Cardiac septum (tissue), 1 donor: ENCODE measurements at regions of chr12 and their contacts with region 1.

Region 1: GRCh38 chr12:25386831-25387731 is 136.4 kb upstream of the KRAS start:
- DNase-seq: peak; percentile 89

Region 2: DNA sequence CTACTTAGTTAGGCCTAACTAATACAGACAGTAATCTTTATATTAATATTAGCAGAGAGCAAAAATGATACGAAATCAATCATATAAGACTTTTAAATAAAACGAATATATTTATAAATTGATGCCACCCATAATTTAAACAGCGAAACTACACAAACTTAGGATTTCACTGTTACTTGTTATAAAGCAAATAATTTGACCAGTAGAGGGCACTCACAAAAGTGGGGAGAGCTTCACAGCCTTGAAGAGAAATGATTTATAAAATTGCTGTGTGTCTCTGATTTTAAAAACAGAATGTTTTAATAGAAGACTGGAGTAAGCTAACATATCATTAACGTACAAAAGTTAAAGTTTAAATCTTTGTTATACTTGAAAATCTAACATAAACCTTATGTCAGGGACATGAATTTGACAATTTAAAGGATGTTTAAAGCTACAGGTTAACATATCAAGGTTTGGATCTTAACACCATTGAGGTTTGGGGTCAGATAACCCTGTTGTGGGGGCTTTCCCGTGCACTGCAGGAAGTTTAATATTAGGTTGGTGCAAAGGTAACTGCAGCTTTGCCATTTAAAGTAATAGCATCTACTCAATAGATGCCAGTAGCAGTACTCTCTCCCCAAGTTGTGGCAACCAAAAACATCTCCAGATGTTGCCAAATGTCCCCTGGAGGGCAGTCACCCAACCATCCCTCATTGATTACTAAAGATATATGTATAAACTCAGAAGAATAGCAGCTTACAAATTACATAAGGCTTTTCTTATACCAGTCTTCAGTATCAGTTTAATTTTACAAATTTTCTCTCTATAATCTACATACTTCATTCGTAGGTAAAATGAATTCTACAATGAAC is 145.7 kb before region 1 on chr12:
- intact Hi-C with region 1: loop called (anchors 1 kb)
- DNase-seq: no peak

Region 3: DNA sequence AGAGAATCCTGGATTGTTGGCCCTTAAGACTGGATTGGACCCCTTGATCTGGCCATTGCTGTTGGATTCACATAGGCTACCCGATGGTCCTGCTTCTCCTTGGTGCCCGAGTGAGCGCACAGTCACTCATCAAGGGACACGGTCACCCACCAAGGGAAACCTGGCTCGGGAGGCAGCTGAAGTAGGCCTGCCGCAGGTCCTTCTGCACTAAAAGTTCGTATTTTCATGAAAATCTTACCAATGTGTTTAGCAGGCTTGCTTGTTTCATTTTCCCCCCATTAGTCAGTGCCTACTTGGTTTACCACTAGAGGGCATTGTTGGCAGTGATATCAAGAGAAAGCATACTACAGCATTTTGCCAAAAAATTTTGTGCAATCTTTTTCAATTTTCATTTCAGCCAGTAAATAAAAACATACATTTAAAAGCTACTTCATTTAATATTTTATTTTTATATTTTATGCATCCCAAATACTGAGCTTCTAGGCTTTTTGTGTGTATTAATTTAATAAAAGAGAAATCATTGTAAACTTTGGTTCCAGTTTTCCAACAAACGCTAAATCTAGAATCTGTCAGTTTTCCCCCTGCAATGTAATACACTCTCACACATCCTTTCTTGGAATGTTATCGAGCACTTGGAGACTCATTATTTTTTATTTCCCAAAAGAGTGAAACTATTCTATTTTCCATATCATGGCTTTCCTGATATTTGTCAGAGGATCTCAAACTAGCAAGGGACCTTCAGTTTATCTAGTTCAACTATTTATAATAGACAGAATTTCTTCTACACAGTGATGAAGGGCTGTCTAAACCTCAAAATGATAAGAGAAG is 49.3 kb after region 1 on chr12:
- intact Hi-C with region 1: no loop called
- DNase-seq: no peak